GM12878 (cell line): ENCODE measurements at regions of chr4 and their contacts with region 1.

Region 1: GRCh38 chr4:42371306-42372252 is 25.7 kb upstream of the SHISA3 start:
- DNase-seq: no peak
- ATAC-seq: peak; percentile 82
- H3K4me3 ChIP-seq: no peak overlapping the region
- H3K27ac ChIP-seq: no peak overlapping the region
- H3K4me1 ChIP-seq: no peaks in the 10 kb centered on the region
- H3K27me3 ChIP-seq: no peaks in the 10 kb centered on the region
- CTCF ChIP-seq: peak; percentile 58 to 66 (median 64); a peak in 5 of 6 replicates
- EP300 ChIP-seq: no peak
- POLR2A ChIP-seq: no peak
- RAD21 ChIP-seq: peak; percentile 80

Region 2: DNA sequence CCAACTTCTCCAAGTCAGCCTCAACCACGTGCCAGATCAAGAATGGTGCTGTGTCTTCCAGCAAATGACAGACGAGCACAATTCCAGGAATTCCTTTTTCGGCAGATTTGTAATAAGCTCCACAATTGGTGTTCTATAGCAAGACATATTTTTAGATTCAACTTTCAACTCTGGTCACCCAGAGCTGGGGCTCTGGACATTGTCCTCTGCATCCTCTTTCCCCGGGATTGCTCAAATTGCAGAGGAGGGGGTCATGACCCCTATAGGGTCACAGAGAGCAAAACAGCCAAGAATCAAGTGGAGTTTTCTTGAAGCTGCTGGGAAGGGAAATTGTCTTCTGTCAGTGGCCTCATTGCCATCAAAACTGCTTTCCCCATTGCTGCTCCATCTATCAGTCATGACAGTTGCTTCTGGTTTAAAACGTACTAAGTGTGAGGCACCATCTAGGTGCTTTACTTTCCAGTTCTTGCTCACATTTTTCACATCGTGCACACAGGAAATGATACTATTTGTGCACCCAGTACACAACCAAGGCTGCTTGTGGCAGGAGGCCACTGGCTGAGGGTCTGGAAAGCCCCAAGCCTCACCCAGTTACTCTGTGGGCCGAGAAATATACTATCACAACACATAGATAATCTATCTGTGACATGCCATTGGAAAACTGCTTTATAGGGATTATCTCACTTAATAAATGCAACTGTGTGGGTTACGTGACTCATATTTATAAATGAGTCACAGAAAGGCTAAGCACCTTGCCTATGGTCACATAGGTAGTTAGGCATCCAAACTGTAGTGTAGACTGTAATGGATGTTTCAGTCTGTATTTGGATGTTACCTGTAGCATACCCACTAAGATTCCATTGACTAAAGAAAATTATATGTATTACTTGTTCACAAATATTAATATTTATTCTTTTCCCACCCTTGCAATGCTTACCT is 531.4 kb before region 1 on chr4:
- CTCF ChIA-PET with region 1: no interaction called
- POLR2A ChIA-PET with region 1: no interaction called
- RAD21 ChIA-PET with region 1: no interaction called
- SMC1A ChIA-PET with region 1: no interaction called
- in situ Hi-C with region 1: no loop called
- intact Hi-C with region 1: no loop called
- DNase-seq: peak; percentile 39
- ATAC-seq: peak; percentile 96
- H3K4me3 ChIP-seq: no peak overlapping the region
- H3K27ac ChIP-seq: no peak overlapping the region
- H3K4me1 ChIP-seq: no peaks in the 10 kb centered on the region
- H3K27me3 ChIP-seq: no peaks in the 10 kb centered on the region; a peak in 1 of 4 replicates
- CTCF ChIP-seq: no peak
- EP300 ChIP-seq: peak in 1 of 2 experiments; percentile 4; a peak in 1 of 4 replicates
- POLR2A ChIP-seq: no peak
- RAD21 ChIP-seq: no peak

Region 3: DNA sequence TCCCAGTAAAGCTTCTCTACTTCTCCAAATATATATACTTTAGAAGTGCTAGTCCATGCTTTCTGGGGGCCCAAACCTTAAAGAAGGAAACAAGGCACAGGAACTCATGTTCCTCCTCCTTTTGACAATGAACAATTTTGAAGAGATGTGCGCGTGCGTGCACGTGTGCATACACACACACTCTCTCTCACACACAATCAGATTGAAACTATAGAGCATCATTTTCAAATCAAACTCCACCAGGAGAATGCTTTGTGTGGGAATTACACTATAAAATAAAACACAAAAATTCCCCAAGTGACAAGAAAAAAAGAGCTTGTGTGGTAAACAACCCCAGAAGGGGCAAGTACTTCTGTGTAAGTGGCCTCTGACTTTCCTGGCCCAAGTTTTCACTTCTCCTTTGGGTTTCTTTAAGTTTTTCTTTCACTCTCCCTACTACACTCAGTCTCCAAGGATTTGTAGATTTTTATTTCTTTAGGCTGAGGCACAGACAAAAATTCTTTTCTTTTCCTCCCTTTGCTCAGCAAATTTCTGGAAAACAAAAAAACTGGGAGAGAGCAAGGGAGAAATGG is 20.9 kb before region 1 on chr4:
- CTCF ChIA-PET with region 1: interaction called, 11 read pairs
- POLR2A ChIA-PET with region 1: no interaction called
- RAD21 ChIA-PET with region 1: interaction called, 3 read pairs
- SMC1A ChIA-PET with region 1: interaction called, 5 read pairs
- in situ Hi-C with region 1: no loop called
- intact Hi-C with region 1: no loop called
- DNase-seq: no peak
- ATAC-seq: peak; percentile 76
- H3K4me3 ChIP-seq: no peak overlapping the region; the same call in 1 of the 2 replicates
- H3K27ac ChIP-seq: peak overlapping the region; percentile 46
- H3K4me1 ChIP-seq: peaks cover 19% of the 10 kb centered on the region
- H3K27me3 ChIP-seq: no peaks in the 10 kb centered on the region
- CTCF ChIP-seq: no peak
- EP300 ChIP-seq: no peak
- POLR2A ChIP-seq: no peak
- RAD21 ChIP-seq: no peak

Region 4: GRCh38 chr4:42396752-42397634 is 25.4 kb after region 1 on chr4 and contains the start of gene SHISA3:
- CTCF ChIA-PET with region 1: interaction called, 10 read pairs
- POLR2A ChIA-PET with region 1: no interaction called
- RAD21 ChIA-PET with region 1: interaction called, 5 read pairs
- SMC1A ChIA-PET with region 1: interaction called, 9 read pairs
- in situ Hi-C with region 1: no loop called
- intact Hi-C with region 1: no loop called
- DNase-seq: no peak
- ATAC-seq: peak; percentile 52
- H3K4me3 ChIP-seq: peak within 1 kb of the TSS; percentile 83
- H3K27ac ChIP-seq: no peak within 1 kb of the TSS
- H3K4me1 ChIP-seq: peaks cover 16% of the 10 kb centered on the region
- H3K27me3 ChIP-seq: peaks cover 2 to 10% of the 10 kb centered on the region in 2 experiments
- CTCF ChIP-seq: no peak
- EP300 ChIP-seq: no peak
- POLR2A ChIP-seq: no peak
- RAD21 ChIP-seq: no peak
- polyA plus RNA-seq, gene SHISA3: 1.9 to 4.6 TPM

Region 5: GRCh38 chr4:42512226-42512625 is 140.6 kb after region 1 on chr4:
- CTCF ChIA-PET with region 1: interaction called, 22 read pairs
- POLR2A ChIA-PET with region 1: no interaction called
- RAD21 ChIA-PET with region 1: interaction called, 4 read pairs
- SMC1A ChIA-PET with region 1: interaction called, 90 read pairs
- in situ Hi-C with region 1: no loop called
- intact Hi-C with region 1: no loop called
- DNase-seq: no peak
- ATAC-seq: no peak
- H3K4me3 ChIP-seq: no peak overlapping the region
- H3K27ac ChIP-seq: no peak overlapping the region
- H3K4me1 ChIP-seq: peaks cover 9% of the 10 kb centered on the region
- H3K27me3 ChIP-seq: no peaks in the 10 kb centered on the region
- CTCF ChIP-seq: no peak
- EP300 ChIP-seq: no peak
- POLR2A ChIP-seq: no peak
- RAD21 ChIP-seq: no peak

Region 6: GRCh38 chr4:42547801-42548200 is 176.2 kb after region 1 on chr4:
- CTCF ChIA-PET with region 1: no interaction called
- POLR2A ChIA-PET with region 1: no interaction called
- RAD21 ChIA-PET with region 1: no interaction called
- SMC1A ChIA-PET with region 1: no interaction called
- in situ Hi-C with region 1: no loop called
- intact Hi-C with region 1: no loop called
- DNase-seq: no peak
- ATAC-seq: no peak
- H3K4me3 ChIP-seq: no peak overlapping the region
- H3K27ac ChIP-seq: no peak overlapping the region
- H3K4me1 ChIP-seq: no peaks in the 10 kb centered on the region
- H3K27me3 ChIP-seq: no peaks in the 10 kb centered on the region
- CTCF ChIP-seq: no peak
- EP300 ChIP-seq: no peak
- POLR2A ChIP-seq: no peak
- RAD21 ChIP-seq: no peak

Region 7: GRCh38 chr4:42768125-42768748 is 396.7 kb after region 1 on chr4:
- CTCF ChIA-PET with region 1: interaction called, 11 read pairs
- POLR2A ChIA-PET with region 1: no interaction called
- RAD21 ChIA-PET with region 1: interaction called, 4 read pairs
- SMC1A ChIA-PET with region 1: interaction called, 3 read pairs
- in situ Hi-C with region 1: no loop called
- intact Hi-C with region 1: no loop called
- DNase-seq: no peak
- ATAC-seq: peak; percentile 79
- H3K4me3 ChIP-seq: no peak overlapping the region
- H3K27ac ChIP-seq: no peak overlapping the region
- H3K4me1 ChIP-seq: no peaks in the 10 kb centered on the region
- H3K27me3 ChIP-seq: no peaks in the 10 kb centered on the region; a peak in 1 of 4 replicates
- CTCF ChIP-seq: peak in 2 of 3 experiments; percentile 16 to 28; a peak in 2 of 6 replicates
- EP300 ChIP-seq: no peak
- POLR2A ChIP-seq: no peak
- RAD21 ChIP-seq: 0 out of 2 replicates have a peak, but pooled peaks have one; percentile 39